ENCODE measurements at regions of chr5 and their contacts with region 1.

Region 1: DNA sequence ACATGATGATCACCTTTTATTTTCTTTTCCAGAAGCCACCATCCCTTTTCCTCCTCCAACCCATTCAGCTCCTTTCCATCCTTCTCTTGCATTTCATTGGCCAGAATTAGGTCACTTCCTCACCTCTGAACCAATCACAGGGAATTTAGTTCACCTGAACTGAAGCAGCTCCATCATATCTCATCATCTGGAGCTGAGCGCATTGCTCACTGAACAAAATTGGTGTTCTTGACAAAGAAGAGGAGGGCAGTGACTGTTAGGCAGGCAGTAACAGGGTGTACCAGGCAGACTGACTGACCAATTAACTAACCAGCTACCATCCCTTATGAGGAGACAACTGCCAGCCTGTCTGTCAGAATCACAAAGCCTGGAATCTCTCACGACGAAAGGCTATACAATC is 1.8 kb upstream of the ZNF354A start:
- DNase-seq: no peak
- ATAC-seq: no peak
- H3K4me3 ChIP-seq: no peak overlapping the region
- H3K4me3 Mint-ChIP-seq: peak overlapping the region in 1 of 3 donors; percentile 33
- H3K27ac ChIP-seq: no peak overlapping the region
- H3K27ac Mint-ChIP-seq: peak overlapping the region in 1 of 2 donors; percentile 22
- H3K4me1 ChIP-seq: peaks cover 4 to 14% of the 10 kb centered on the region in 2 experiments
- H3K4me1 Mint-ChIP-seq: peaks cover 0 to 12% (median 7%) of the 10 kb centered on the region in 3 donors
- H3K27me3 ChIP-seq: no peaks in the 10 kb centered on the region
- H3K27me3 Mint-ChIP-seq: no peaks in the 10 kb centered on the region

Region 2: GRCh38 chr5:178706591-178706990 is 25.7 kb before region 1 on chr5:
- CTCF ChIA-PET with region 1: no interaction called
- POLR2A ChIA-PET with region 1: no interaction called
- DNase-seq: no peak
- ATAC-seq: no peak
- H3K4me3 ChIP-seq: no peak overlapping the region
- H3K4me3 Mint-ChIP-seq: no peak overlapping the region
- H3K27ac ChIP-seq: no peak overlapping the region
- H3K27ac Mint-ChIP-seq: no peak overlapping the region
- H3K4me1 ChIP-seq: no peaks in the 10 kb centered on the region
- H3K4me1 Mint-ChIP-seq: no peaks in the 10 kb centered on the region
- H3K27me3 ChIP-seq: peaks cover 0 to 6% of the 10 kb centered on the region in 2 experiments
- H3K27me3 Mint-ChIP-seq: no peaks in the 10 kb centered on the region

Region 3: GRCh38 chr5:178859625-178860531 is 127.6 kb after region 1 on chr5 and contains the start of gene ZNF354B:
- CTCF ChIA-PET with region 1: interaction called, 4 to 38 read pairs
- POLR2A ChIA-PET with region 1: interaction called in 1 of 2 experiments, 4 read pairs
- DNase-seq: peak; percentile 66 to 90 (median 79)
- ATAC-seq: peak; percentile 97
- H3K4me3 ChIP-seq: peak within 1 kb of the TSS; percentile 65 to 87
- H3K4me3 Mint-ChIP-seq: peak within 1 kb of the TSS; percentile 83 to 87 (median 86)
- H3K27ac ChIP-seq: peak within 1 kb of the TSS; percentile 46
- H3K27ac Mint-ChIP-seq: peak within 1 kb of the TSS; percentile 88 to 93
- H3K4me1 ChIP-seq: peaks cover 4 to 16% of the 10 kb centered on the region in 2 experiments
- H3K4me1 Mint-ChIP-seq: peaks cover 28 to 33% (median 30%) of the 10 kb centered on the region in 3 donors
- H3K27me3 ChIP-seq: no peaks in the 10 kb centered on the region
- H3K27me3 Mint-ChIP-seq: peaks cover 0 to 4% of the 10 kb centered on the region in 2 donors
- total RNA-seq, gene ZNF354B: 14.5 to 37.8 (median 32.5) TPM

Region 4: GRCh38 chr5:179060116-179061008 is 328.1 kb after region 1 on chr5 and contains the start of gene ZNF354C:
- CTCF ChIA-PET with region 1: interaction called in 1 of 2 experiments, 19 read pairs
- POLR2A ChIA-PET with region 1: interaction called in 1 of 2 experiments, 3 read pairs
- DNase-seq: peak; percentile 70 to 90 (median 81)
- ATAC-seq: peak; percentile 98 to 99 (median 98)
- H3K4me3 ChIP-seq: peak within 1 kb of the TSS; percentile 61 to 74
- H3K4me3 Mint-ChIP-seq: peak within 1 kb of the TSS; percentile 85 to 96 (median 95)
- H3K27ac ChIP-seq: peak within 1 kb of the TSS; percentile 57
- H3K27ac Mint-ChIP-seq: peak within 1 kb of the TSS; percentile 92 to 94
- H3K4me1 ChIP-seq: peaks cover 10 to 12% of the 10 kb centered on the region in 2 experiments
- H3K4me1 Mint-ChIP-seq: peaks cover 27 to 33% (median 29%) of the 10 kb centered on the region in 3 donors
- H3K27me3 ChIP-seq: no peaks in the 10 kb centered on the region
- H3K27me3 Mint-ChIP-seq: peaks cover 7 to 9% of the 10 kb centered on the region in 2 donors
- total RNA-seq, gene ZNF354C: 5.3 to 9.3 (median 8.1) TPM

Measured in T-cell (primary cell).